H1 (cell line): ENCODE measurements at regions of chr12 and their contacts with region 1.

Region 1: GRCh38 chr12:92987362-92987761 is 58.3 kb upstream of the EEA1 start:
- DNase-seq: no peak
- H3K4me3 ChIP-seq: no peak overlapping the region
- H3K27ac ChIP-seq: no peak overlapping the region
- H3K4me1 ChIP-seq: peaks cover 0 to 4% (median under 1%) of the 10 kb centered on the region in 4 experiments; a peak in 3 of 7 replicates
- H3K27me3 ChIP-seq: no peaks in the 10 kb centered on the region
- CTCF ChIP-seq: peak in 2 of 3 experiments; percentile 46 to 49; a peak in 2 of 4 replicates
- EP300 ChIP-seq: no peak
- POLR2A ChIP-seq: no peak
- RAD21 ChIP-seq: peak; percentile 73 to 81

Region 2: DNA sequence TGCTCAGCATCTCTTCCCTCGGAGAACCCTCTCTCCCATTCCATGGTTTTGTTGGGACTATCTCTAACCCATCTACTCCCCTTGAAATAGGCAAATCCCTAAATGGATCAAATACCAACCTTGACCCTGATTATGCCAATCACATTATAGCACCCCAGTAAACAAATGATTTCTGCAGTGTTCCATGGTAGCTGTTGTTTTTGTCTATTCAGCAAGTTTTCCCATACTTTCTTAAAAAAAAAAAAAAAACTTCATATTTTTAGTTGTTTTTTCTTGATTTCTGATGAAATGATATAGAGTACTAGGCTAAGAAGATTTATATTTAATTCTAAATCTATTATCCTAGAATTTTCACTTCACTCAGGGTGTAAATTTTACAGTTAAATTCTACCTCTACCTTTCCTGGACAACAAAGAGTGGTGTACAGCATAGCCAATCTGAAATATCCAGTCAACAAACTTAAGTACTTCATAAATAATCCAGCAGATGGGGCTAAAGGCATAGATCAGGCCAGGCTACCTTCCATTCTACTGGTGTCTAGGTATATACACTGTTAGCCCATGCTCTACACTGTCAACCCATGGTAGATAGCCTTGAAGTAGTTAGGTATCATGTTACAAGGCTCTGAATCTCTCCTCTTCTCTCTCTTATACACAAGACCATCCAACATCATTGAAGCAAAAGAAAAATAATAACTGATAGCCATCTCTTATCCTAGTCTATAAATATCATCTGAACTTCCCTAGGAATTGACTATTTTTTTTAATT is 202.4 kb before region 1 on chr12:
- CTCF ChIA-PET with region 1: interaction called, 13 read pairs
- POLR2A ChIA-PET with region 1: no interaction called
- DNase-seq: peak in 1 of 2 experiments; percentile 19
- H3K4me3 ChIP-seq: no peak overlapping the region
- H3K27ac ChIP-seq: no peak overlapping the region
- H3K4me1 ChIP-seq: no peaks in the 10 kb centered on the region; a peak in 1 of 7 replicates
- H3K27me3 ChIP-seq: no peaks in the 10 kb centered on the region
- CTCF ChIP-seq: peak in 2 of 3 experiments; percentile 51 to 67; a peak in 2 of 4 replicates
- EP300 ChIP-seq: no peak
- POLR2A ChIP-seq: no peak
- RAD21 ChIP-seq: peak; percentile 91 to 92

Region 3: GRCh38 chr12:92932376-92932775 is 55.0 kb before region 1 on chr12:
- CTCF ChIA-PET with region 1: no interaction called
- POLR2A ChIA-PET with region 1: no interaction called
- DNase-seq: no peak
- H3K4me3 ChIP-seq: no peak overlapping the region
- H3K27ac ChIP-seq: no peak overlapping the region
- H3K4me1 ChIP-seq: peaks cover 0 to 17% (median 3%) of the 10 kb centered on the region in 4 experiments; a peak in 4 of 7 replicates
- H3K27me3 ChIP-seq: no peaks in the 10 kb centered on the region
- CTCF ChIP-seq: no peak
- EP300 ChIP-seq: no peak
- POLR2A ChIP-seq: no peak
- RAD21 ChIP-seq: no peak

Region 4: GRCh38 chr12:93002293-93003054 is 15.1 kb after region 1 on chr12:
- CTCF ChIA-PET with region 1: interaction called, 11 read pairs
- POLR2A ChIA-PET with region 1: no interaction called
- DNase-seq: no peak
- H3K4me3 ChIP-seq: no peak overlapping the region
- H3K27ac ChIP-seq: no peak overlapping the region
- H3K4me1 ChIP-seq: 0 out of 7 replicates have a peak, but pooled peaks cover 0 to 2% (median 0%) of the 10 kb centered on the region in 4 experiments
- H3K27me3 ChIP-seq: no peaks in the 10 kb centered on the region
- CTCF ChIP-seq: no peak
- EP300 ChIP-seq: no peak
- POLR2A ChIP-seq: no peak
- RAD21 ChIP-seq: no peak

Region 5: DNA sequence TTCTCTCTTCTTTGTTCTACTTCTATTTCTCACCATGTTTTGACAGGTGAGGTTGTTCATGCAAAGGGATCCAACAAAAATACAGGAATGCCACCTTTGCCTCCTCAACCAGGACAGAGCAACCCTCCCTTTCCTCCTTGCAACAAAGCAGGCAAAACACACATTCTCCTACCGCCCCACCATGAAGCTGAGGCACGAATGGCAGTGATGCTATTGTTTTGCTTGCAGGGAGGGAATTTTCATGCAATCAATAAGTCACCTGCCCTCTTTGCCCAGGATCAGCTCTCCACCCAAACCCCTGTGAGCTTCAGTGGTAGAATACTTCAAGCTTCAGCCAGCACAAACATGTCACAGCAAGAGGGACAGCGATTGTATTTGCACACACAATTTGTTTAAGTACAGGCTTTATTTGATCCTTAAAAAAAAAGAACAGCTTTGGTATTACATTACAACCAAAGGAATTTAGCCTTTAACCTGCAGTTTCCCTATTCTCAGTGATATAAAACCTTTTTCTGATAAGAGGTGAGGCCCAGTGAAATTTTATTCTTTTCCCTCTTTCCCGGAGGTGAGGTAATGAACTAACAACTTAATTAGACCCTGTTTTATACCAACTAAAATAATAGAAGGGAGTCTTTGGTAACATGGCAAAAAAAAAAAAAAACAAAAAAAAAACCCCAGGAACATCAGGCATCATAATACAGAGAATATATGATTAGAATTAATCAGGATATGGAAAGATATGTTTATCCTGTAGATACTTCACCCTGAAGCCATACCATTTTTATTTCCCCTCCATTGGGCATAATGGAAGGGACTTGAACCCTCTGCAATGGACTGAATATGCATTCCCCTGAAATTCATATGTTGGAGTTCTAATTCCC is 28.7 kb after region 1 on chr12:
- CTCF ChIA-PET with region 1: interaction called, 15 read pairs
- POLR2A ChIA-PET with region 1: no interaction called
- DNase-seq: no peak
- H3K4me3 ChIP-seq: no peak overlapping the region
- H3K27ac ChIP-seq: no peak overlapping the region
- H3K4me1 ChIP-seq: peaks cover 0 to 7% (median 4%) of the 10 kb centered on the region in 4 experiments; a peak in 4 of 7 replicates
- H3K27me3 ChIP-seq: no peaks in the 10 kb centered on the region
- CTCF ChIP-seq: no peak
- EP300 ChIP-seq: no peak
- POLR2A ChIP-seq: no peak
- RAD21 ChIP-seq: no peak

Region 6: DNA sequence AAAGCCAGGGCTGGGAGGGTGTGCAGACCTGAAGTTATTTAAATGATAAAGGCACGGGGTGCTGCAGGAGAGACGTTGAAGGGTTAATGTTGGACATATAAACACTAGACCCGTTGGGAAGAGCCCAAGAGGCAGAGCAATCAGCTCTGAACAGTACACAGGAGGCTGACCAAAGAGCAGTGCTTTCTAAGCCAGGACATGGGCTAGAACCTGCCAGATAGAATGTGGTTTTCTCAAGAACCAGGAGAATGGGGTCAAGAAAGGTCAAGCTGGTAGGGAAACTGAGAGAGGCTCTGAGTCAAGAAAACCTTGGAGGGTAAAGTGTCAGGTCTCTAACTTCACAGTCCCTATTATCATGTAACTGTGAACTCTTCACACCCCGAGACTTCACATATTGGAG is 85.0 kb after region 1 on chr12:
- CTCF ChIA-PET with region 1: no interaction called
- POLR2A ChIA-PET with region 1: no interaction called
- DNase-seq: no peak
- H3K4me3 ChIP-seq: no peak overlapping the region
- H3K27ac ChIP-seq: no peak overlapping the region
- H3K4me1 ChIP-seq: no peaks in the 10 kb centered on the region
- H3K27me3 ChIP-seq: peaks cover 0 to 3% (median 0%) of the 10 kb centered on the region in 4 experiments; a peak in 4 of 7 replicates
- CTCF ChIP-seq: no peak
- EP300 ChIP-seq: no peak
- POLR2A ChIP-seq: no peak
- RAD21 ChIP-seq: no peak

Region 7: DNA sequence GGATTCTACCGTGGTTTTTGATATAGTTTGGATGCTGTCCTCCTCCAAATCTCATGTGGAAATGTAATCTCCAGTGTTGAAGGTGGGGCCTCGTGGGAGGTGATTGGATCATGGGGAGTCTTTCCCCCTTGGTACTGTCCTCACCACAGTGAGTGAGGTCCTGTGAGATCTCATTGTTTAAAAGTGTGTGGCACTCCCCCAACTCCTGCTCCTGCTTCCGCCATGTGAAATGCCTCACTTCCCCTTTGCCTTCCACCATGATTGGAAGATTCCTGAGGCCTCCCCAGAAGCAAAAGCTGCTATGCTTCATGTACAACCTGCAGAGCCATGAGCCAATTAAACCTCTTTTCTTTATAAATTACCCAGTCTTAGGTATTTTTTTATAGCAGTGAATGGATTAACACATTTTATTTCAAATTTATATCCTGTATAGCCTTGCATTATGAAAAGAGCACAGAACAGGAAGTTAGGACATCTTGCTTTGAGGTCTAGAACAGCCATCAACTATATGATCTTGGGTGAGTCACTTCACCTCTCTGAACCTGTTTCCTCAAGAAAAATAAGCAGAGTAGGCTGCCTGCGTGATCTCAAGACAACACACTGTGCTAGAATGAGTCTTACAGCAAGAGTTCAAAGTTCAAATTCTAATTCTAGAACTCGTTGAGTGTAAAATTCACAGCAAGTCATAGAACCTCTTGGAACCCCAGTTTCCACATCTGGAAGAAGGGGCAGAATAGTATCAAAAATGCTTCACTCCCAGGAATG is 102.6 kb after region 1 on chr12:
- CTCF ChIA-PET with region 1: no interaction called
- POLR2A ChIA-PET with region 1: no interaction called
- DNase-seq: no peak
- H3K4me3 ChIP-seq: no peak overlapping the region
- H3K27ac ChIP-seq: no peak overlapping the region
- H3K4me1 ChIP-seq: peaks cover 0 to 3% (median 0%) of the 10 kb centered on the region in 4 experiments; a peak in 1 of 7 replicates
- H3K27me3 ChIP-seq: no peaks in the 10 kb centered on the region
- CTCF ChIP-seq: no peak
- EP300 ChIP-seq: no peak
- POLR2A ChIP-seq: no peak
- RAD21 ChIP-seq: no peak

Region 8: DNA sequence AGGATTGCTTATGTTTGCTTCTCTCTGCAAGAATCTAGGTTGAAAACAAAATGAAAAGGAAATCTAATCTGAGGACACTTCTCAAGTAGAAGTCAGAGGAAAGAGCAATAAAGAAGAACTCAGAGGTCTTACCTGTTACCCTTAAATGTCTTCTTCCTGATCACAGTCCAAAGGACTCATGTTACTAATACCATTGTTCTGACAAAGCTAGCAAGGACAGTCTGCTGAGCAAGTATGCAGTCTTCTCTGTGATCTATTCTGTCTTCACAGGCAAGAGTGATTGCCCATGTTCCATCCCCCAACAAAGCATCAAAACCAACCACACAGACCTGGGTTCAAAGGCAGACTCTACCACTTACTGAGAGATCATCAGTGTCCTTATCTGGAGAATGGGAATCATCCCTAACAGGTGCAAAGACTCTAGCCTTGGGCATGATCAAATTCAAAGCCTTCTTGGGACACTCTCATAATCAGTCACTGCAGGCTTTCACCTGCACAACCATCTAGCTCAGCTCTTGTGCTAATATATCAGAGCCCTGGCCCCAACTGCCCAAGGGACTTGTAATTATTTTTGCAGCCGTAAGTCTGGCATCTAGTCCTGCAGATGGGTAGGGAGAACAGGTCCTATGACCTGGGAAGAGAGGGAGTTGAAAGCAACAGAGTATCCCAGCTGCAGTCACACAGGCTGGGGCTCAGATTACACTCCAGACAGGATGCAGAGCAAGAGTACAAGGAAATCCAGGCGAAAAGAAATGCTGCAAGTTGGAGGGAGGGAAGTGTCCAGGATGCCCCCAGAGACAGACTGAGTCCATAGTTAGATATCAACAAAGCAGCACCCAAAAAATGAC is 292.4 kb after region 1 on chr12:
- CTCF ChIA-PET with region 1: interaction called, 11 read pairs
- POLR2A ChIA-PET with region 1: no interaction called
- DNase-seq: no peak
- H3K4me3 ChIP-seq: no peak overlapping the region
- H3K27ac ChIP-seq: no peak overlapping the region
- H3K4me1 ChIP-seq: no peaks in the 10 kb centered on the region
- H3K27me3 ChIP-seq: no peaks in the 10 kb centered on the region
- CTCF ChIP-seq: no peak
- EP300 ChIP-seq: no peak
- POLR2A ChIP-seq: no peak
- RAD21 ChIP-seq: no peak

Region 9: DNA sequence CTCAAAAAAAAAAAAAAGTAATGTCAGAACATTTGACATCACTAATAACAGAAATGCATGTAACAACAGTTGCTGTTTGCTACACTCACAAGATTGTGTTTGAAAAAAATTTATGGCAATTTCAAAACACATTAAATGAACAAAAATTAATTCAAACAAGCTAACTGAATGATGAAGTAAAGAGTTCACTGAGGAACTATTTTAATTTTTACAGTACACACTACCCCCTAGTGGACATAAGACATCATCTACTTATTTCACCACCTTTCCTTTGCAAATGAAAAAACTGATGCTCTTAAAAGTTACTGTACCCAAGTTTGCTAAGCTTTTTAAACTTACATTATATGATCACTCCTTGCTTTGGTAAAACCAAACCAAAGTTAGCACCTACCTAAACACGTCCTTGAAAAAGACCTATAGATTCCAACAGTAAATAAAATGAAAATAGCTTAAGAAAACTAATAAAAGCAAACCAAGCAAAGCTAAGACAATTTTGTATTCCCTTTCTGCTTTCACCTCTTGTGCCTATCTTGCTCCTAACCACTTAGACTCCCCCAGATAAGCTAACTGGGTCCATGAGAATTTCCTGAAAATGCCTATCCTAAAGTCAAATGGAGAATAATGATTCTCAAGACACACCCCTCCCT is 432.1 kb after region 1 on chr12:
- CTCF ChIA-PET with region 1: interaction called, 11 read pairs
- POLR2A ChIA-PET with region 1: no interaction called
- DNase-seq: no peak
- H3K4me3 ChIP-seq: no peak overlapping the region
- H3K27ac ChIP-seq: no peak overlapping the region
- H3K4me1 ChIP-seq: peaks cover 0 to 8% (median 5%) of the 10 kb centered on the region in 4 experiments; a peak in 6 of 7 replicates
- H3K27me3 ChIP-seq: no peaks in the 10 kb centered on the region
- CTCF ChIP-seq: peak in 1 of 3 experiments; percentile 46; a peak in 2 of 4 replicates
- EP300 ChIP-seq: no peak
- POLR2A ChIP-seq: no peak
- RAD21 ChIP-seq: peak in 1 of 2 experiments; percentile 38; a peak in 3 of 4 replicates

Region 10: GRCh38 chr12:94033101-94033500 is 1045.7 kb after region 1 on chr12:
- CTCF ChIA-PET with region 1: no interaction called
- POLR2A ChIA-PET with region 1: no interaction called
- DNase-seq: no peak
- H3K4me3 ChIP-seq: no peak overlapping the region
- H3K27ac ChIP-seq: no peak overlapping the region
- H3K4me1 ChIP-seq: no peaks in the 10 kb centered on the region
- H3K27me3 ChIP-seq: no peaks in the 10 kb centered on the region
- CTCF ChIP-seq: no peak
- EP300 ChIP-seq: no peak
- POLR2A ChIP-seq: no peak
- RAD21 ChIP-seq: no peak